ENCODE measurements at regions of chrX and their contacts with region 1.

Region 1: DNA sequence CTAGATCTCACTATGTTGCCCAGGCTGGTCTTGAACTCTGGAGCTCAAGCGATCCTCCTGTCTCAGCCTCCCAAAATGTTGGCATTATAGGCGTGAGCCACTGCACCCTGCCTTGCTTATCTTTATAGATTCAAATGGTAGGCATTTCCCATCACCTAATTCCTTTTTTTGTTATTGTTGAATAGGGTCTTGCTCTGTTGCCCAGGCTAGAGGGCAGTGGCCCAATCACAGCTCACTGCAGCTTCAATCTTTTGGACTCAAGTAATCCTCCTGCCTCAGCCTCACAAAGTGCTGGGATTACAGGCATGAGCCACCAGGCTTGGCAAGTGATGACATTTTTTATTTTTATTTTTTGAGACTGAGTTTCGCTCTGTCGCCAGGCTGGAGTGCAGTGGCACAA is 16.7 kb upstream of the WDR45 start:
- DNase-seq: no peak
- ATAC-seq: no peak
- H3K4me3 ChIP-seq: no peak overlapping the region
- H3K27ac ChIP-seq: no peak overlapping the region
- H3K4me1 ChIP-seq: no peaks in the 10 kb centered on the region; the same call in 1 of the 2 replicates
- H3K27me3 ChIP-seq: no peaks in the 10 kb centered on the region
- CTCF ChIP-seq: no peak
- EP300 ChIP-seq: no peak
- POLR2A ChIP-seq: no peak
- RAD21 ChIP-seq: no peak

Region 2: GRCh38 chrX:48903290-48903689 is 193.1 kb before region 1 on chrX:
- CTCF ChIA-PET with region 1: no interaction called
- POLR2A ChIA-PET with region 1: interaction called, 15 read pairs
- RAD21 ChIA-PET with region 1: no interaction called
- SMC1A ChIA-PET with region 1: no interaction called
- in situ Hi-C with region 1: no loop called
- intact Hi-C with region 1: no loop called
- DNase-seq: no peak
- ATAC-seq: no peak
- H3K4me3 ChIP-seq: no peak overlapping the region
- H3K27ac ChIP-seq: no peak overlapping the region
- H3K4me1 ChIP-seq: no peaks in the 10 kb centered on the region
- H3K27me3 ChIP-seq: no peaks in the 10 kb centered on the region
- CTCF ChIP-seq: no peak
- EP300 ChIP-seq: no peak
- POLR2A ChIP-seq: no peak
- RAD21 ChIP-seq: no peak

Region 3: GRCh38 chrX:49079489-49080428 is 16.7 kb before region 1 on chrX and contains the start of gene WDR45:
- CTCF ChIA-PET with region 1: no interaction called
- POLR2A ChIA-PET with region 1: interaction called, 10 read pairs
- RAD21 ChIA-PET with region 1: interaction called, 3 read pairs
- SMC1A ChIA-PET with region 1: no interaction called
- in situ Hi-C with region 1: no loop called
- intact Hi-C with region 1: no loop called
- DNase-seq: peak; percentile 8
- ATAC-seq: peak; percentile 92
- H3K4me3 ChIP-seq: peak within 1 kb of the TSS; percentile 67
- H3K27ac ChIP-seq: peak within 1 kb of the TSS; percentile 57
- H3K4me1 ChIP-seq: no peaks in the 10 kb centered on the region
- H3K27me3 ChIP-seq: no peaks in the 10 kb centered on the region
- CTCF ChIP-seq: no peak
- EP300 ChIP-seq: no peak
- POLR2A ChIP-seq: peak; percentile 83
- RAD21 ChIP-seq: no peak
- polyA plus RNA-seq, gene WDR45: 5.9 to 10.3 TPM

Measured in GM12878 (cell line).